ENCODE measurements at regions of chr11 and their contacts with region 1.

Region 1: GRCh38 chr11:62726915-62727763 is at the start of gene HNRNPUL2:
- DNase-seq: peak; percentile 99
- ATAC-seq: peak; percentile 89
- H3K4me3 Mint-ChIP-seq: peak within 1 kb of the TSS; percentile 100
- H3K27ac Mint-ChIP-seq: peak within 1 kb of the TSS; percentile 98
- H3K4me1 Mint-ChIP-seq: peaks cover 41% of the 10 kb centered on the region
- H3K27me3 Mint-ChIP-seq: no peaks in the 10 kb centered on the region
- total RNA-seq, gene HNRNPUL2: 67.9 to 72.5 TPM

Region 2: DNA sequence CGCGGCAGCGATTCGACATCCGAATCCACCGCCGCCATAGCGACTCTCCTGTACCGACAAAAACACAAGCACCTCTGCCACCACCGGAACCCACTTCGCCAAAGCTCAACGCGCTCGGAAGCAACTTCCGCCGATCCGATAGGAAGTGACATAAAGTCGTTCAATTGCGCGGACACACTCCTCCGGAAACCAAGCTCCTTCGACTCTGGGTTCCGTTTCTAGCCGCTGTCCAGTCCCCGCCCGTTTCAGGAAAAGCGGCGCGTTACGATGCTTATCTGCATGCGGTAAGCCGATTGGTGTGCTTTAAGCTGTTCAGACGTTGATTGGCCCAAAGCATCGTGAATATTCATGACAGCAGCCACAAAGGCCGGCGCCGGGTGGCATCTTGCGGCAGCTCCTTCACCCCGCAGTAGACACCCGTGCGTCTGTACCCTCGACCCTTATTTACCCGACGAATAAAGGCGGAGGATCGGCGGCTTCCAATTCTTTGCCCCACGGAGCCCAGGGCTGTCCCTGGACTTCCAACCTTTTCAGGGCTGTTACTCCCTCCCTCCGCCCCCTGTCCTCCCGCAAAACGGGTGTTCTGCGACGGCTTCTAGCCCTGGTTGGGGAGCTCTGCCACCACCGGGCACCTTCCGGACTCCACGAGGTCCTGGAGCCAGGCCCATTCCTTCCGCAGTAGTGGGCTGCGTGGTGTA is 135.5 kb before region 1 on chr11 and contains the start of gene TUT1:
- POLR2A ChIA-PET with region 1: interaction called, 12 read pairs
- DNase-seq: peak; percentile 91
- ATAC-seq: peak; percentile 88
- H3K4me3 Mint-ChIP-seq: peak within 1 kb of the TSS; percentile 100
- H3K27ac Mint-ChIP-seq: peak within 1 kb of the TSS; percentile 99
- H3K4me1 Mint-ChIP-seq: peaks cover 38% of the 10 kb centered on the region
- H3K27me3 Mint-ChIP-seq: no peaks in the 10 kb centered on the region
- total RNA-seq, gene TUT1: 27.2 to 38.2 TPM

Region 3: DNA sequence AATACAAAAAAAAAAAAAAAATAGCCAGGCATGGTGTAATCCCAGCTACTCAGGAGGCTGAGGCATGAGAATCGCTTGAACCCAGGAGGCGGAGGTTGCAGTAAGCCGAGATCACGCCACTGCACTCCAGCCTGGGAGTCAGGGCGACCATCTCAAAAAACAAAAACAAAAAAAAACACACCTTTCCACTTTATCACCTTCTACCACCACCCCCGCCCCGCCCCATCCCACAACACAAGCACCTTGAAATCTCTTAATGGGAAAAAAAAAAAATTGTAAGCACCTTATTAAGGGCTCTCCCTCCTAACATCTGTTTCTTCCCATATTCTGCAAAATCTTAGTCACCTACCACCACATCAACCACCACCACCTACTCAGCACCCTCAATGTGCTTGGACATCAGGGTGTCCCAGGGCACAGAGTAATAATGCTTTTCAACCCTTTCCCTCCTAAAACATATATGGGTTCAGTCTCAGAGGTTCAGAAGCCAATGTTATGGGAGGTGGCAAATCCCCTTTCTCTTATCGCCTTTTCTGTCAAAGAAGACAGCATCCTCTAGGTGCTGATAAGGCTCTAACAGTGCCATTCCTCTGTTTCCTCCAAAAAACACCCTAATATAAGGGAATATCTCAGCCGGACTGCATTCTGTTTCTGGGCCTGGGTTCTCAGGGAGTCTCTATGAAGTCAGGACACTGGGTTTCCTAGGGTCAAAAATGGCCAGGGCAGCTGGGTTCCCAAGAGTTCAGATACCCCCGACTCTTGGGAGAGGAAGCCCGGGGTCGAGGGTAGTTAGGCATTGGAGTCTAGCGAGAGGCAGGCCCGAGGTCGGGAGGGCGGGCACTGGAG is 74.8 kb before region 1 on chr11:
- POLR2A ChIA-PET with region 1: interaction called, 10 read pairs
- DNase-seq: no peak
- ATAC-seq: no peak
- H3K4me3 Mint-ChIP-seq: peak overlapping the region; percentile 94
- H3K27ac Mint-ChIP-seq: peak overlapping the region; percentile 91
- H3K4me1 Mint-ChIP-seq: peaks cover 17% of the 10 kb centered on the region
- H3K27me3 Mint-ChIP-seq: no peaks in the 10 kb centered on the region

Region 4: DNA sequence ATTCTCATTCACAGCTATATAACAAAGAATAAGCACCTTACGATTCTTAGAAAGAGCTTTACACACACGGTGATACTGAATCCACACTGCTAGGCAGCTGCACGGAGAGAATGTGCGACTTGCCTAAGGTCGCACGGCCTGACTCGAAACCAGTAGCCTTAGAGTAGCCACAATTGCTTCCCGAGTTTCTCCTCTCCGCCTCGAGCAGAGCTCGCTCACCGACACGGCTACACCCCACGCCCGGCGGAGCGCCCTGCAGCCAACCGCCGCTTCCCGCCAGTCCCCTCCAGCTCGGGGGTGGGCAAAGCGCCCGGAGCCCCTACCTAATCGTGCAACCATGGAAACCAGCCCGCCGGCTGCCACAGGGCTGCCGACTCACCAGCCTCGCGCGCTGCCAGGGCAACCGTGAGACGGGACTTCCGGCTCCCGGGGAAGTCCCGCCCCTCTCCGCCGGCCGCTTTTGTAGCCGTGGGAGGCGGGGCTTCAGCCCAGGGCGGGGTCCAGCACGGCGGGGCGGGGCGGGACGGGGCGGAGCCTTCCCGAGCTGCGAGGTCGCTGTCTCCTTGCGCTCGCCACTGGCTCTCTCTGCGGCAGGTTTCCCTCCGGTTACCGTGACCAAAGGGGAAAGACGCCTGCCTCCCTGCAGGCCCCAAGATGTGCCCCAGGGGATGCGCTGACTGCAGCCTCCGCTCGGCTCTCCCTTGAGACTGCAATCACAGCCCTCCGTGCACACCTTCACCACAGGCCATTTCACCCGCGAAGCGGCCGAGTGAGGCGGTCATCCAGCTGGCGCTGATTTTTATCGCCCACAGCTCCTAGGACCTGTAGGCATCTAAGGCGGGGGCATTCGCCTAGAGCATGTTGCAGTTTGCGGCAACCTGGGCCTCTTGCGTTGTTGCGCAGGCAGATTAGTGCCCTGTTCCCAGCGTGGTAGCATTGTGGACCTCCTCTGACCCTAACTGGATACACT is 21.0 kb before region 1 on chr11:
- POLR2A ChIA-PET with region 1: interaction called, 107 read pairs
- DNase-seq: peak; percentile 95
- ATAC-seq: peak; percentile 43
- H3K4me3 Mint-ChIP-seq: peak overlapping the region; percentile 91
- H3K27ac Mint-ChIP-seq: peak overlapping the region; percentile 73
- H3K4me1 Mint-ChIP-seq: peaks cover 39% of the 10 kb centered on the region
- H3K27me3 Mint-ChIP-seq: no peaks in the 10 kb centered on the region

Region 5: GRCh38 chr11:62787005-62787759 is 60.0 kb after region 1 on chr11 and contains the start of gene TMEM179B:
- POLR2A ChIA-PET with region 1: interaction called, 22 read pairs
- DNase-seq: peak; percentile 93
- ATAC-seq: peak; percentile 73
- H3K4me3 Mint-ChIP-seq: peak within 1 kb of the TSS; percentile 92
- H3K27ac Mint-ChIP-seq: peak within 1 kb of the TSS; percentile 97
- H3K4me1 Mint-ChIP-seq: peaks cover 38% of the 10 kb centered on the region
- H3K27me3 Mint-ChIP-seq: no peaks in the 10 kb centered on the region
- total RNA-seq, gene TMEM179B: 48.7 to 52.2 TPM

Region 6: GRCh38 chr11:62880803-62881578 is 153.9 kb after region 1 on chr11 and contains the start of gene SLC3A2:
- POLR2A ChIA-PET with region 1: interaction called, 31 read pairs
- DNase-seq: peak; percentile 93
- ATAC-seq: peak; percentile 83
- H3K4me3 Mint-ChIP-seq: peak within 1 kb of the TSS; percentile 100
- H3K27ac Mint-ChIP-seq: peak within 1 kb of the TSS; percentile 100
- H3K4me1 Mint-ChIP-seq: peaks cover 40% of the 10 kb centered on the region
- H3K27me3 Mint-ChIP-seq: no peaks in the 10 kb centered on the region
- total RNA-seq, gene SLC3A2: 222 to 228 TPM

Measured in activated naive CD8-positive, alpha-beta T cell treated with anti-CD3 and anti-CD28 coated beads, Interleukin-2, amount 10 ng/mL, durations not matched to agents 7 days and 5 days (primary cell).